GM13977 (cell line): ENCODE measurements at regions of chr6 and their contacts with region 1.

Region 1: GRCh38 chr6:32413427-32414047 is 6.6 kb upstream of the BTNL2 start:
- DNase-seq: peak; percentile 73
- CTCF ChIP-seq: peak; percentile 92

Region 2: GRCh38 chr6:32244946-32245398 is 168.6 kb before region 1 on chr6:
- in situ Hi-C with region 1: loop called (anchors 10 kb)
- DNase-seq: peak; percentile 78
- CTCF ChIP-seq: peak; percentile 94

Region 3: GRCh38 chr6:32697031-32697430 is 283.5 kb after region 1 on chr6:
- in situ Hi-C with region 1: loop called (anchors 5 kb)
- DNase-seq: no peak
- CTCF ChIP-seq: no peak

Region 4: DNA sequence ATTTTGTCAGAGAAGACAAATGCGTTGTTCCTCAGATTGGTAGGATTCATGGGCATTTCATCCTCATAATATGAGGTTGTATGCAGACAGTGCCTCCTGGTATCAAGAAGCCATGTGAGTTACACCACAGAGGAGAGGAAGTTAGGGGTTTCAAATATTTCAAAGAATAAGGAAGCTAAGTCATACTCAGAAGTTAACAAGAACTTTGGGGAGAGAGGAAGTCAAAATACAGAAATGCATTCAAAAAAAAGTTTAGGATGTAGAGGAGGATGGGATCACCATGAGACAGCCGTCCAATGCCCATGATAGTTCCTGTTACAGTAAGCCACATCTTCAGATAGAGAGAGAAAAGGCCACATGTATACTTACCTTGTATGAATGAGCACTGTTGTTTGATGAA is 381.0 kb after region 1 on chr6:
- in situ Hi-C with region 1: loop called (anchors 5 kb)
- DNase-seq: no peak
- CTCF ChIP-seq: no peak

Region 5: DNA sequence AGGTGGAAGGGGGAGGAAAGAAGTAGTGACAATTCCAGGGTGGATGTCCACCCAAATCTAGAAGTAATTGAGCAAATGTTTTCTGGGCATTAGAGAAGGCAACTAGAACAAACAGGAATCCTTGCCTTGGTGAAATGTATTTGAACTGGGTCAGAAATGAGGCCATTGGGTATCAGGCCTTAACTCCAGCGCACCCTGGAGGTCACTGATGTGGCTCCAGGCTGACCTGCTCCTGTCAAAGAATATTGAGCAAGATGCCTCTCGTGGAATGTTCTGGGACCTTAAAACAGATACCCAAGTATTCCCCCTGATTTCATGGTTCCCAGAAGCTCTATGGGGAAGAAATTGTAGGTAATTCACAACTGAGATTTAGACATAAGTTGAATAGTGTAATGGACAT is 669.2 kb after region 1 on chr6:
- in situ Hi-C with region 1: no loop called
- DNase-seq: peak; percentile 55
- CTCF ChIP-seq: peak; percentile 54